A549 (cell line): ENCODE measurements at regions of chr14 and their contacts with region 1.

Region 1: DNA sequence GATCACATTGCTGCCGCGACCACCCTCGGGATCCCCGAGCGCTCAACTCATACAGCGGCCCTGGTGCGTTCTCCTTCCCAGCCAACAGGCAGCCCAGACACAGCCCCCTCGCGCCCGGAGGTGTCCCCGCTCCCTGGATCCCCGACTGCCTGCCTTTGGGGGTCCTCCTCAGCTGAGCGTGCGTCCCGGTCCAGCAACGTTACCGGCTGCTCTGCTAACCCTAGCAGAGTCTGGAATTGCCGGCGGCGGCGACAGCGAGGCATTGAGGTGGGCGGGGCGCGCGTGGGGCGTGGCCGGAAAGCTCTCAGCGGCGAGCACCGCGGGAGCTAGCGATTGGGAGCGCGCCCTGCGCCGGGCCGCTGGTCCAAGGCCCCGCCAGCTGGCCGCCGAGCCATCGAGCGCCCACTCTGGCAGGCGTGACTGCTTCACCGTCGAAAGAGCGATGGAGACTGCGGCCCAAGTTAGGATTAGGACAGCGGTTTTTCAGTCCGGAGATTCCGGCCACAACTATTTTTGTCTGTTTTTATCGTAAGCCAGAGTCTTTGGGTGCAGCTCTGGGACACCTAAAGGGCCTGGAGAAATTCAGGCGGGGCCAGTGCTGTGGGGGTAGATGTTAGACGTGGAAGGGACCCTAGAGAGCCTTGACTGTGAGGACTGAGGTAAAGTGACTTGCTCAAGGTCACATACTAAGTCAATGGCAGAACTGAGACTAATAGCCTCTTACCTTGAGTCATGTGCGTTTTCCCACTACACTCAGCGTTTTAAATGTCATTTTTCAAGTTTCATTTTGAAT is at the start of gene HEATR5A:
- DNase-seq: peak; percentile 78 to 94
- ATAC-seq: peak; percentile 95 to 96
- H3K4me3 ChIP-seq: peak within 1 kb of the TSS; percentile 95
- H3K27ac ChIP-seq: peak within 1 kb of the TSS; percentile 85 to 95
- H3K4me1 ChIP-seq: peaks cover 25% of the 10 kb centered on the region
- CTCF ChIP-seq: no peak
- EP300 ChIP-seq: no peak
- POLR2A ChIP-seq: peak; percentile 100
- RAD21 ChIP-seq: no peak
- polyA plus RNA-seq, gene HEATR5A: 47.1 and 49.5 TPM in 2 replicates

Region 2: GRCh38 chr14:31026395-31027118 is 394.0 kb before region 1 on chr14:
- CTCF ChIA-PET with region 1: no interaction called
- POLR2A ChIA-PET with region 1: interaction called, 10 read pairs
- DNase-seq: peak; percentile 87 to 97
- ATAC-seq: peak; percentile 90 to 96
- H3K4me3 ChIP-seq: peak overlapping the region; percentile 99
- H3K27ac ChIP-seq: peak overlapping the region; percentile 99
- H3K4me1 ChIP-seq: peaks cover 52% of the 10 kb centered on the region
- CTCF ChIP-seq: no peak
- EP300 ChIP-seq: no peak
- POLR2A ChIP-seq: no peak
- RAD21 ChIP-seq: no peak; a peak in 1 of 5 replicates

Region 3: GRCh38 chr14:31435276-31435675 is 14.8 kb after region 1 on chr14:
- CTCF ChIA-PET with region 1: interaction called, 5 read pairs
- POLR2A ChIA-PET with region 1: interaction called, 58 read pairs
- DNase-seq: no peak
- ATAC-seq: no peak
- H3K4me3 ChIP-seq: no peak overlapping the region
- H3K27ac ChIP-seq: no peak overlapping the region
- H3K4me1 ChIP-seq: peaks cover 6% of the 10 kb centered on the region; the same call in 2 of the 3 replicates
- CTCF ChIP-seq: no peak
- EP300 ChIP-seq: no peak
- POLR2A ChIP-seq: no peak
- RAD21 ChIP-seq: no peak

Region 4: DNA sequence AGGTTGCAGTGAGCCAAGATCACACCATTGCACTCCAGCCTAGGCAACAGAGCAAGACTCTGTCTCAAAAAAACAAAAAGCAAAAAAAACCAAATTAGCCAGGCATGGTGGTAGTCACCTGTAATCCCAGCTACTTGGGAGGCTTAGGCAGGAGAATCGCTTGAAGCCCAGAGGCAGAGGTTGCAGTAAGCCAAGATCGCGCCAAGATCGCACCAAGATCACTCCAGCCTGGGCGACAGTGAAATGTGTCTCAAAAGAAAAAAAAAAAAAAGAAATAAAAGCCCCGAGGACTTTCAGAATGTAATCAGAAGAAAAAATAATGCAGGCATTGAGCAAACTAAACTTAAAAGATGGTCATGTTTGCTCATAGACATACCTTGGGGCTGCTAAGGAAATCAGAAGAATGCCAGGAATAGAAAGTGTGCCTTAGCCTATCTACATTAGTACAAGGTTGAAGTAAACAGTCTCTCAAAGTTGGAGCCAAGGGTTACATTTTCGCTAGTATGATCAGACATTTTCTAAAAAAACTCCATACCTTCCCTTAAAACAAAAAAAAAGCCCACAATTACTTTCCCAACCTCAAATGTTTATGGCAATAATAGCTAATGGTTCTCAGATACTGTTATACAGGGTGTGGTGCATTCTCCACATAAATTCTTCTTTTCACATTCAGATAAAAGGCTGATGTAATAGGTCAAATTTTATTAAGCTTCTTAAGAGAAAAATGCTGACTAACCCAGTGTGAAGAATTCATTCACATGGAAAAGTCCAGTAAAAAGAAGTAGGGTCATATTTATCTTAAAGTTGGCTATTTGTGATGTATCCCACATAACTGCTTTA is 21.0 kb after region 1 on chr14:
- CTCF ChIA-PET with region 1: interaction called, 4 read pairs
- POLR2A ChIA-PET with region 1: interaction called, 58 read pairs
- DNase-seq: peak in 1 of 2 experiments; percentile 88
- ATAC-seq: peak; percentile 89 to 97
- H3K4me3 ChIP-seq: peak overlapping the region; percentile 13; the same call in 1 of the 3 replicates
- H3K27ac ChIP-seq: peak overlapping the region; percentile 82 to 87
- H3K4me1 ChIP-seq: peaks cover 40% of the 10 kb centered on the region
- CTCF ChIP-seq: no peak
- EP300 ChIP-seq: peak; percentile 15 to 69; a peak in 2 of 5 replicates
- POLR2A ChIP-seq: no peak
- RAD21 ChIP-seq: no peak

Region 5: GRCh38 chr14:31449971-31450610 is 29.6 kb after region 1 on chr14:
- CTCF ChIA-PET with region 1: interaction called, 14 read pairs
- POLR2A ChIA-PET with region 1: interaction called, 33 read pairs
- DNase-seq: peak; percentile 33 to 56
- ATAC-seq: peak; percentile 78 to 83
- H3K4me3 ChIP-seq: no peak overlapping the region
- H3K27ac ChIP-seq: peak overlapping the region in 1 of 2 experiments; percentile 5; a peak in 1 of 6 replicates
- H3K4me1 ChIP-seq: peaks cover 30% of the 10 kb centered on the region
- CTCF ChIP-seq: peak; percentile 61
- EP300 ChIP-seq: no peak
- POLR2A ChIP-seq: no peak
- RAD21 ChIP-seq: peak; percentile 66 to 73

Region 6: DNA sequence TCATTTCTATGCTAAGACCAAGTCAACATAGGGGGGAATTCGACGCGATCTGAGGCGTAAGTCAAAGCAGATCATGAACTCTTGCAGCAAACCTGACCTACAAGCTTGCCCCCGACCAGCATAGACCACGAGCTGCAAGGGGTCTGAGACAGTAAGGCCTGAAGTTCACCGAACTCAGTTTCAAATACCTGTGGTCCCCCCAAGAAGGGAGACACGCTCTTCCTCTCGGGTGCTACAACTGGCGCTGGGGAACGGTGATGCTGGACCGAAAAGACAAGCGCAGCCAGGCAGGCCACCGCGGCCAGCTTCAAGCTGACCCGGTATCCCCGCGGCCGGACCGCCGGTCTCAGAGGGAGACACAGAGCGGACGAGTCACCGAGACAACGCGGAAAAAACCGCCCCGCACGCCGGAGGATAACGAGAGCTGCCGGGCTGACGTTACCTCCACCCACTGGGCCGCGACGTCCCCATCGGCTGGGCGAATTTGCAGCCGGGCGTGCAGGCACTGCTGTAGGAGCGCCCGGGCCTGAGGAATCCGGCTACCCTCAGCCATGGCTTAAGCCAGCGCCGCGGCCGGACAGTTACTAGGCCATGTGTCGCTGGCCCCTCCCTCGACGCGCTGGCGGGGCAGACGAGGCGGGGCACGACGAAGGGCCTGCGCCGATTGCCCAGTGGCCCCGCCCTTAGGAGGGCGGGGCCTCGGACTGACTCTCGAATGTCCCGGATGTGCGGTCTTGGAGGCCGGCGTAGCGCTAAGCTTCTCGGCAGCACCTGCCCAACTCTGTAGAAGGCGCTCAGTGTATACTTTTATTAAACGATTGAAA is 36.5 kb after region 1 on chr14 and contains the start of gene DTD2:
- CTCF ChIA-PET with region 1: interaction called, 11 read pairs
- POLR2A ChIA-PET with region 1: interaction called, 36 read pairs
- DNase-seq: peak; percentile 81 to 96
- ATAC-seq: peak; percentile 99
- H3K4me3 ChIP-seq: peak within 1 kb of the TSS; percentile 70
- H3K27ac ChIP-seq: peak within 1 kb of the TSS; percentile 95 to 97
- H3K4me1 ChIP-seq: peaks cover 21% of the 10 kb centered on the region
- CTCF ChIP-seq: no peak
- EP300 ChIP-seq: no peak
- POLR2A ChIP-seq: peak; percentile 96
- RAD21 ChIP-seq: no peak
- polyA plus RNA-seq, gene DTD2: 26.3 and 39.5 TPM in 2 replicates